WTC11 (cell line): ENCODE measurements at regions of chrX and their contacts with region 1.

Region 1: DNA sequence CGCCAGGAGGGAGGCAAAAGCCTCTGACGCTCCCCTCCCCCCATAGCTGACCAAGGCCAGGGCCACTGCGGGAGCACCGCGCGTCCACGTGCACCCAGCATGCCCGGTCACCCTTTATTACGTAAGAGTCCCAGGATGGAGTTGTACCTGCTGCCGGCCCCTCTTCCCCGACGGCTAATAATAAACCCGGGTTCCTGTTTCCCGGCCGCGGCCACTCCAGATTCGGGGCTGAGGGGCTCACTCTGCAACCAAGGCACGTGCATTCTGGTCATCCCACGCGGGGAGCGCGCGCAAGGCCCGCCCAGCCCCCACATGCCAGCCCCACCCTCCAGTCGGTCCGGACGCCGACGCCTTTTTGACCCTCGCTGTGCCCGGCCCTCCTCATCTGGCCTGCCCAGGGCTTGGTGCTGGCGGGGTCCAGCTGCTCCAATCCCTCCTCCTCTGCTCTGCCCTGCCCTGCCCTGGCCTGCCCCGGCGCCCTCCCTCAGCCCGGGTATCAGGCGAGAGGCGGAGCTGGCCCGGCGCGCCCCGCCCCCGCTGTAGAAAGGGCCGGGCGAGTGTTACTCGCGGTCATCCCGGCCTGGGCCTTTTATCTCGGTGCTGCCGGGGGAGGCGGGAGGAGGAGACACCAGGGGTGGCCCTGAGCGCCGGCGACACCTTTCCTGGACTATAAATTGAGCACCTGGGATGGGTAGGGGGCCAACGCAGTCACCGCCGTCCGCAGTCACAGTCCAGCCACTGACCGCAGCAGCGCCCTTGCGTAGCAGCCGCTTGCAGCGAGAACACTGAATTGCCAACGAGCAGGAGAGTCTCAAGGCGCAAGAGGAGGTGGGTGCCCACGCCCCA is 2.5 kb downstream of the MID1IP1 start:
- DNase-seq: peak; percentile 88
- ATAC-seq: peak; percentile 87
- H3K4me3 Mint-ChIP-seq: peak overlapping the region; percentile 98
- H3K27ac Mint-ChIP-seq: peak overlapping the region; percentile 99
- H3K4me1 Mint-ChIP-seq: peaks cover 26% of the 10 kb centered on the region
- H3K27me3 Mint-ChIP-seq: no peaks in the 10 kb centered on the region
- CTCF ChIP-seq: no peak

Region 2: GRCh38 chrX:38868941-38869401 is 65.2 kb after region 1 on chrX:
- CTCF ChIA-PET with region 1: no interaction called
- POLR2A ChIA-PET with region 1: interaction called, 41 read pairs
- DNase-seq: no peak
- ATAC-seq: no peak
- H3K4me3 Mint-ChIP-seq: peak overlapping the region; percentile 58; the same call in 1 of the 2 replicates
- H3K27ac Mint-ChIP-seq: no peak overlapping the region
- H3K4me1 Mint-ChIP-seq: peaks cover 73% of the 10 kb centered on the region
- H3K27me3 Mint-ChIP-seq: no peaks in the 10 kb centered on the region
- CTCF ChIP-seq: no peak

Region 3: GRCh38 chrX:39065051-39065871 is 261.5 kb after region 1 on chrX:
- CTCF ChIA-PET with region 1: interaction called, 4 read pairs
- POLR2A ChIA-PET with region 1: interaction called, 11 read pairs
- DNase-seq: peak; percentile 59
- ATAC-seq: peak; percentile 89
- H3K4me3 Mint-ChIP-seq: peak overlapping the region; percentile 53
- H3K27ac Mint-ChIP-seq: peak overlapping the region; percentile 93
- H3K4me1 Mint-ChIP-seq: peaks cover 26% of the 10 kb centered on the region
- H3K27me3 Mint-ChIP-seq: peaks cover 4% of the 10 kb centered on the region
- CTCF ChIP-seq: no peak